Dorsolateral prefrontal cortex (tissue), 120 donors: ENCODE measurements at regions of chr3 and their contacts with region 1.

Region 1: GRCh38 chr3:142578327-142579223 is at the start of gene ATR:
- DNase-seq: peak; percentile 90 to 96 (median 95)
- H3K4me3 ChIP-seq: peak within 1 kb of the TSS; percentile 69 to 100 (median 93)
- H3K27ac ChIP-seq: peak within 1 kb of the TSS; percentile 33 to 96 (median 83)
- H3K27me3 ChIP-seq: no peaks in the 10 kb centered on the region
- CTCF ChIP-seq: peak in 43 of 56 donors; percentile 9 to 67 (median 38)
- total RNA-seq, gene ATR: 15.6 to 43.1 (median 29.8) TPM

Region 2: GRCh38 chr3:142447852-142448823 is 130.4 kb before region 1 on chr3 and contains the start of gene XRN1:
- intact Hi-C with region 1: loop called in 1 of 2 experiments (anchors 5 kb)
- DNase-seq: peak; percentile 82 to 95 (median 91)
- H3K4me3 ChIP-seq: peak within 1 kb of the TSS; percentile 74 to 100 (median 94)
- H3K27ac ChIP-seq: peak within 1 kb of the TSS; percentile 35 to 97 (median 91)
- H3K27me3 ChIP-seq: no peaks in the 10 kb centered on the region
- CTCF ChIP-seq: peak in 27 of 56 donors; percentile 6 to 42 (median 20)
- total RNA-seq, gene XRN1: 27.4 to 83.1 (median 53.9) TPM

Region 3: DNA sequence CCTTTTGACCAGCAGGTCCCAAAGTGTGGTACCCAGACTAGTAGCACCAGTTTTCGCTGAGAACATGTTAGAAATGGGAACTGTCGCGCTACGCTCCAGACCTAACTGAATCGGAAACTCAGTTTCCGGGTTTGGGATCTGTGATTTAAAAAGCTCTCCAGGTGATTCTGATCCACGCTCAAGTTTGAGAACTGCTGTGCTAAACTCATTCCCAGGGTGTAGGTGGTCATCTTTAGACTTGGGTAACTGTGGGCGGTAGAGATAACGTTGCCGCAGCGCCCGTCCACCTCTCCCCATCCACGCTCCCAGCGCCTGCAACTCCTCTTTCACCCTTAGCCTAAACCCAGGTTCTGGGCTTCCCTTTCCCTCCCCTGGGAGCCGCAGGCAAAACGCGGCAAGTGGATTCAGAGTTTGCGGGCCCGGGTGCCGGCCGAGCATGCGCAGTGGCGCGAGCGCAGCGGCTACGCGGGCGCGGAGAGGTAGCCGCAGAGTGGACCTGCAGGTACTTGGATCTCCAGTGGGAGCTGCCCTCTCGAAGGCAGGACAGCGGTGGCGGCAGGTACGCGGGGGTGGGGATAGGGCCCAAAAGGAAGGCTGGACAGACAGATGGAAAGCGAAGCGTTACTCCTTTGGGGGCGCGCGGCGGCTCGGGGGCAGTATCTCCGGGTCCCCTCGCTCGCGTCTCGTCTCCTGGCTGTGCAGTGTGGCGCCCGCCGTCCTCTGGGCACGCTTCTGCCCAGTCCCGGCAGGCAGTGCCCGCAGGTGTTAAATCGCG is 17.6 kb after region 1 on chr3 and contains the start of gene PLS1:
- intact Hi-C with region 1: loop called in 1 of 2 experiments (anchors 1 kb)
- DNase-seq: peak; percentile 62 to 93 (median 70)
- H3K4me3 ChIP-seq: peak within 1 kb of the TSS; percentile 57 to 98 (median 79)
- H3K27ac ChIP-seq: peak within 1 kb of the TSS in 13 of 59 donors; percentile 12 to 73 (median 53)
- H3K27me3 ChIP-seq: no peaks in the 10 kb centered on the region
- CTCF ChIP-seq: peak in 31 of 56 donors; percentile 3 to 62 (median 35)
- total RNA-seq, gene PLS1: 1.4 to 13.3 (median 4.8) TPM

Region 4: GRCh38 chr3:142723968-142724681 is 145.6 kb after region 1 on chr3 and contains the start of gene TRPC1:
- intact Hi-C with region 1: loop called (anchors 5 kb)
- DNase-seq: peak; percentile 56 to 88 (median 83)
- H3K4me3 ChIP-seq: peak within 1 kb of the TSS; percentile 59 to 96 (median 83)
- H3K27ac ChIP-seq: peak within 1 kb of the TSS in 58 of 59 donors; percentile 14 to 97 (median 79)
- H3K27me3 ChIP-seq: no peaks in the 10 kb centered on the region
- CTCF ChIP-seq: peak in 2 of 56 donors; percentile 0 to 6
- total RNA-seq, gene TRPC1: 23.1 to 52.5 (median 33.1) TPM

Region 5: DNA sequence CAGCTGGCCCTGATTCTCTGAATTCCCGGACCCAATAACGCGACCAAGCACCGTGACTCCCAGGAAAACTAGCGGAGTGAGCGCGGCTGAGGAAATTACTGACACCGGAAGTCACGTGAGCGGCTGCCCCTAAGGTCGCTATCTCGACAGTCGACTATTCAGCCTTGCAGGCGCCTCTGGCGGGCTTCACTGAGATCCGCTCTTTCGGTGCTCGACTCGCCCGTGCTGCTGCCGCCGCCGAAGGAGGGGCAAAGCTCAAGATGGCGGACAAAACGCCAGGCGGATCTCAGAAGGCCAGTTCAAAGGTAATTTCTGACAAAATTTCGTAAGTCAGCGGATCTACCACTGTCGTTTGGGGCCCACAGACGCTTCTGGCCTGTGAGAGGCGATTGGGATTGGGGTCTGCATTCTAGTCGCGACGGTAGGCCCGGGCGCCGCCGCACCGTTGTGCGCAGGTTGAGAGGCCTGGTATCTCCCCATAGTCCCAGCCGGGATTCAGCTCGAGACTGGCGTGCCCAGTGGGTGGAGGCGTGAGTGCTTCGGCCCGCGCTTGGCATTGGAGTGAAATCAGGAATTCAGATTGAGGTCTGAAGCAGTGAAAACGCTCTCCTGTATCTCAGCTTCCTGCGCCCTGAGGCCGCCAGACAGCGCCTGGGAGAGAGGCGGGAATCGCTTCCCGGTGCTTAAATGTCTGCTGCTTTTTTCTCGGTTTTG is 423.0 kb after region 1 on chr3 and contains the start of gene U2SURP:
- intact Hi-C with region 1: loop called (anchors 1 to 5 kb)
- DNase-seq: peak; percentile 94 to 98 (median 98)
- H3K4me3 ChIP-seq: peak within 1 kb of the TSS; percentile 59 to 100 (median 95)
- H3K27ac ChIP-seq: peak within 1 kb of the TSS; percentile 70 to 97 (median 90)
- H3K27me3 ChIP-seq: peaks cover 0 to 2% (median 0%) of the 10 kb centered on the region in 45 donors
- CTCF ChIP-seq: peak in 43 of 56 donors; percentile 10 to 70 (median 37)
- total RNA-seq, gene U2SURP: 60.5 to 131 (median 95.1) TPM